ENCODE measurements at regions of chr7 and their contacts with region 1.

Region 1: GRCh38 chr7:55964261-55965099 is at the start of gene NIPSNAP2:
- DNase-seq: peak; percentile 55 to 77 (median 65)
- H3K4me3 ChIP-seq: peak within 1 kb of the TSS; percentile 42 to 62
- H3K4me3 Mint-ChIP-seq: peak within 1 kb of the TSS; percentile 82 to 90 (median 86)
- H3K27ac ChIP-seq: peak within 1 kb of the TSS; percentile 76
- H3K27ac Mint-ChIP-seq: peak within 1 kb of the TSS; percentile 89 to 94 (median 94)
- H3K4me1 ChIP-seq: peaks cover 19% of the 10 kb centered on the region
- H3K4me1 Mint-ChIP-seq: peaks cover 29 to 49% (median 32%) of the 10 kb centered on the region in 4 donors
- H3K27me3 ChIP-seq: no peaks in the 10 kb centered on the region
- H3K27me3 Mint-ChIP-seq: no peaks in the 10 kb centered on the region
- total RNA-seq, gene NIPSNAP2: 29.0 to 33.3 TPM

Region 2: GRCh38 chr7:55887821-55888247 is 76.6 kb before region 1 on chr7:
- CTCF ChIA-PET with region 1: interaction called, 3 read pairs
- POLR2A ChIA-PET with region 1: no interaction called
- intact Hi-C with region 1: loop called (anchors 5 kb)
- DNase-seq: peak in 2 of 5 donors; percentile 8 to 17
- H3K4me3 ChIP-seq: no peak overlapping the region
- H3K4me3 Mint-ChIP-seq: peak overlapping the region; percentile 81 to 89 (median 87)
- H3K27ac ChIP-seq: no peak overlapping the region
- H3K27ac Mint-ChIP-seq: peak overlapping the region; percentile 74 to 95 (median 88)
- H3K4me1 ChIP-seq: peaks cover 7% of the 10 kb centered on the region
- H3K4me1 Mint-ChIP-seq: peaks cover 5 to 10% (median 6%) of the 10 kb centered on the region in 4 donors
- H3K27me3 ChIP-seq: no peaks in the 10 kb centered on the region
- H3K27me3 Mint-ChIP-seq: peaks cover 0 to 2% of the 10 kb centered on the region in 2 donors

Region 3: GRCh38 chr7:55917771-55918170 is 46.7 kb before region 1 on chr7:
- CTCF ChIA-PET with region 1: no interaction called
- POLR2A ChIA-PET with region 1: no interaction called
- intact Hi-C with region 1: no loop called
- DNase-seq: no peak
- H3K4me3 ChIP-seq: no peak overlapping the region
- H3K4me3 Mint-ChIP-seq: no peak overlapping the region
- H3K27ac ChIP-seq: no peak overlapping the region
- H3K27ac Mint-ChIP-seq: no peak overlapping the region
- H3K4me1 ChIP-seq: no peaks in the 10 kb centered on the region
- H3K4me1 Mint-ChIP-seq: no peaks in the 10 kb centered on the region
- H3K27me3 ChIP-seq: no peaks in the 10 kb centered on the region
- H3K27me3 Mint-ChIP-seq: no peaks in the 10 kb centered on the region

Region 4: GRCh38 chr7:55939514-55940123 is 24.9 kb before region 1 on chr7:
- CTCF ChIA-PET with region 1: no interaction called
- POLR2A ChIA-PET with region 1: no interaction called
- intact Hi-C with region 1: no loop called
- DNase-seq: no peak
- H3K4me3 ChIP-seq: no peak overlapping the region
- H3K4me3 Mint-ChIP-seq: no peak overlapping the region
- H3K27ac ChIP-seq: no peak overlapping the region
- H3K27ac Mint-ChIP-seq: no peak overlapping the region
- H3K4me1 ChIP-seq: no peaks in the 10 kb centered on the region
- H3K4me1 Mint-ChIP-seq: no peaks in the 10 kb centered on the region
- H3K27me3 ChIP-seq: no peaks in the 10 kb centered on the region
- H3K27me3 Mint-ChIP-seq: peaks cover 0 to 1% of the 10 kb centered on the region in 2 donors

Region 5: GRCh38 chr7:55951637-55952351 is 12.7 kb before region 1 on chr7 and contains the start of gene MRPS17:
- CTCF ChIA-PET with region 1: interaction called, 14 read pairs
- POLR2A ChIA-PET with region 1: interaction called, 6 read pairs
- intact Hi-C with region 1: loop called (anchors 1 kb)
- DNase-seq: peak; percentile 92 to 95 (median 93)
- H3K4me3 ChIP-seq: peak within 1 kb of the TSS; percentile 88 to 96
- H3K4me3 Mint-ChIP-seq: peak within 1 kb of the TSS; percentile 92 to 97 (median 94)
- H3K27ac ChIP-seq: peak within 1 kb of the TSS; percentile 71
- H3K27ac Mint-ChIP-seq: peak within 1 kb of the TSS; percentile 87 to 99 (median 98)
- H3K4me1 ChIP-seq: peaks cover 12% of the 10 kb centered on the region
- H3K4me1 Mint-ChIP-seq: peaks cover 12 to 32% (median 18%) of the 10 kb centered on the region in 4 donors
- H3K27me3 ChIP-seq: no peaks in the 10 kb centered on the region
- H3K27me3 Mint-ChIP-seq: no peaks in the 10 kb centered on the region
- total RNA-seq, gene MRPS17: 11.5 to 13.2 TPM

Region 6: GRCh38 chr7:55977831-55978230 is 13.4 kb after region 1 on chr7:
- CTCF ChIA-PET with region 1: interaction called, 20 read pairs
- POLR2A ChIA-PET with region 1: interaction called, 4 read pairs
- intact Hi-C with region 1: no loop called
- DNase-seq: no peak
- H3K4me3 ChIP-seq: no peak overlapping the region
- H3K4me3 Mint-ChIP-seq: no peak overlapping the region
- H3K27ac ChIP-seq: no peak overlapping the region
- H3K27ac Mint-ChIP-seq: peak overlapping the region in 2 of 7 donors; percentile 4 to 79
- H3K4me1 ChIP-seq: no peaks in the 10 kb centered on the region
- H3K4me1 Mint-ChIP-seq: peaks cover 7 to 20% (median 11%) of the 10 kb centered on the region in 4 donors
- H3K27me3 ChIP-seq: no peaks in the 10 kb centered on the region
- H3K27me3 Mint-ChIP-seq: no peaks in the 10 kb centered on the region

Region 7: DNA sequence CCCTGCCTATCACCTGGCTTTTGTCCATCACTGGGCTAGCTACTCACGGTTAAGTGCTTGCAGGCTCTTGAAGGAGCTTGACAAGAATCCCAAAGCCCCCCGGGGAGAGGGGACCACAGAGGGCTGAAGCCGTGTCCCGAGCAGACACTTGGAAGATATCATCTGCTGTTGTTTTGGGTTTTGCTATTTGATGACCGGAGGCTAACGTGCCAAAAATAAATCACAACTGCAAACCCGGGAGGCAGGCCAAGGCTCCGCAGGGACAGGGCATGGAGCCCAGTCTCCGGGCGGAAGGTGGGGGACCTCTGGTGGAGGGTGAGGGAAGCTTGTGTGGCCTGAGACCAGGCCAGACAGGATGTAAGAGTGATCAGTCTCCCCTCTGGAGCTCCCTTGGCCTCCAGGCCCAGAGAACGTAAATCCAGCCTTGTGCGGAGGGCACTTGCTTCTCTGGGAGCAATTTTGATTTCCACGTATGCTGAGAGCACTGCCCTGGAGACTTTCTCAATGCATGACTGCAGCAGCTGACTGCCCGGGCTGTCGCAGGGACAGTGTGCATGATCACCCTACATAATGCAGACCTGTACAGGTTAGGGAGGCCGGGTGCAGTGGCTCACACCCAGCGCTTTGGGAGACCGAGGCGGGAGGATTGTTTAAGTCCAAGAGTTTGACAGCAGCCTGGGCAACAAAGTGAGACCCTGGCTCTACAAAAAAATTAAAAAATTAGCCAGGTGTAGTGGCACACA is 128.5 kb after region 1 on chr7 and contains the start of gene PHKG1:
- CTCF ChIA-PET with region 1: no interaction called
- POLR2A ChIA-PET with region 1: no interaction called
- intact Hi-C with region 1: no loop called
- DNase-seq: no peak
- H3K4me3 ChIP-seq: no peak within 1 kb of the TSS
- H3K4me3 Mint-ChIP-seq: no peak within 1 kb of the TSS
- H3K27ac ChIP-seq: no peak within 1 kb of the TSS
- H3K27ac Mint-ChIP-seq: peak within 1 kb of the TSS in 1 of 7 donors; percentile 74
- H3K4me1 ChIP-seq: no peaks in the 10 kb centered on the region
- H3K4me1 Mint-ChIP-seq: no peaks in the 10 kb centered on the region
- H3K27me3 ChIP-seq: no peaks in the 10 kb centered on the region
- H3K27me3 Mint-ChIP-seq: no peaks in the 10 kb centered on the region
- total RNA-seq, gene PHKG1: 2.9 to 3.7 TPM